ENCODE measurements at regions of chr5 and their contacts with region 1.

Region 1: DNA sequence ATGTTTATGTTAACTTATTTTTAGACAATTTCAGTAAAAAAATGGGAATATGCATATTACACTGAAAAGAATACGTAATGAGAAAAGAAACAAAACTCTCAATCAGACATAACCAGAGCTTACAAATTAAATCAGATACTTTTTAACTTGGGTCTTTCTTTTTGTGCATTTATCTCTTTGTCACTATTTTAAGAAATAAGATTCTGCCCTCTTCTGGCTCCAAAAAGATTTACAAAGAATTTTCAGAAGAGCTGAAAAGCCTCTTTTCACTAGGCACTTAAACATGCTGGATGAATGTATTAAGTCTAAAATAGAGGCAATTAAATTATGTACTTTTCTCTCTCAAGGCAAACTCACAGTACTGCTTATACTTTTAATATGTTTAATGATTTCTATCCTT is 55.5 kb downstream of the CEP120 start:
- DNase-seq: no peak
- H3K4me3 Mint-ChIP-seq: no peak overlapping the region
- H3K27ac Mint-ChIP-seq: no peak overlapping the region
- H3K4me1 Mint-ChIP-seq: no peaks in the 10 kb centered on the region
- H3K27me3 Mint-ChIP-seq: no peaks in the 10 kb centered on the region
- CTCF ChIP-seq: peak; percentile 30

Region 2: GRCh38 chr5:122896598-122897282 is 471.0 kb before region 1 on chr5:
- CTCF ChIA-PET with region 1: interaction called, 3 read pairs
- intact Hi-C with region 1: loop called (anchors 5 kb)
- DNase-seq: no peak
- H3K4me3 Mint-ChIP-seq: no peak overlapping the region
- H3K27ac Mint-ChIP-seq: no peak overlapping the region
- H3K4me1 Mint-ChIP-seq: peaks cover 4% of the 10 kb centered on the region
- H3K27me3 Mint-ChIP-seq: no peaks in the 10 kb centered on the region
- CTCF ChIP-seq: peak; percentile 46

Region 3: DNA sequence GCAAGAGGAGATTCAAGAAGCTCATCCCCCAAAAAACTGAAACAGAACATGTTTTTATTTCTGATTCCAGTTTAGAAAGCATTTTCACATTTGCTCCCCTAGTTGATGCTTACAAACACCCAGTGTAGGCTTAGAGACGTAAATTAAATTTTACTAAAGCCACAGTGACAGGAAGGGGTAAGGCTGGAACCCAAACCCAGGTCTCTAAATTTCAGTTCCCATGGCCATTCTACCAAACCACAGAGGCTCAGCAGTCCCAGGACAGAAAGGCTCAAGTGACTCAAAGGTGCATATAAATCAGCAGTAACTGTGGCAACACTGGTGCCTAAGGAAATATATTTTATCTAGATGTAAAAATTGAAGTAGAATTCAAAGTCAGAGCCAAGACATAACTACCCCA is 73.2 kb before region 1 on chr5:
- CTCF ChIA-PET with region 1: no interaction called
- intact Hi-C with region 1: no loop called
- DNase-seq: no peak
- H3K4me3 Mint-ChIP-seq: no peak overlapping the region
- H3K27ac Mint-ChIP-seq: no peak overlapping the region
- H3K4me1 Mint-ChIP-seq: no peaks in the 10 kb centered on the region
- H3K27me3 Mint-ChIP-seq: no peaks in the 10 kb centered on the region
- CTCF ChIP-seq: no peak

Region 4: DNA sequence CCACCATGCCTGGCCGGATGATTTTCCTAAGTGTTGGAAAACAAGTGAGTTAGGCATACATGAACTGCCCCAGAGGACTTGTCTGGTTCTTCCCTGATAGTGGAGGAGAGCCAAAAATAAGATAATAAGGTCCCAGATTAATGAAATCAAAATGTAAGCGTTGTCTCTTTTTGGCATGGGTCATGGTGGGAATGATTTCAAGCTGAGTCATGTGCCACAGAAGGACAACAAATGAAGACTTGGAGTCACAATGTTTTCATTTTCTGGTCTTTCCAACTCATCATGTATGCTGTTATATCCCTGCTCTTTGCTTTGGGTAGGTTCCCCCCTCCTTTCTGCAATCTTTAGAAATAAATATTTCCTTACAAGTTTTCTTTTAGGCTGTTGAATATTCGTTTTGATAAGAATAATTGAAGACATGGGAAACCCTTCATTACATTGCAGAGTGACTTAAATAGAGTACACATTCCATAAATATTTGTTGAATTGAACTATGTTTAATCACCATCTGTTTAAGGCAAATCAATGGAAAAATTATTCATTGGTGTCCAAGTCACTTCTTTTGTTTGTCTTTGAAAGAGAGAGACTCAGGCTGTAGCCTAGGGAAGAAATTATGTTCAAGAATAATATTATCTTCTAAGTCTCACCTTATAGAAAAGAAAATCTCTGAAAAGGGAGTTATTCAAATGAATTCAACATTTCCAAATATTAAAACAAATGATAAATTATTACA is 340.5 kb after region 1 on chr5:
- CTCF ChIA-PET with region 1: no interaction called
- intact Hi-C with region 1: no loop called
- DNase-seq: no peak
- H3K4me3 Mint-ChIP-seq: no peak overlapping the region
- H3K27ac Mint-ChIP-seq: no peak overlapping the region
- H3K4me1 Mint-ChIP-seq: no peaks in the 10 kb centered on the region
- H3K27me3 Mint-ChIP-seq: no peaks in the 10 kb centered on the region
- CTCF ChIP-seq: no peak

Measured in Calu3 (cell line).